Activated naive CD4-positive, alpha-beta T cell treated with anti-CD3 and anti-CD28 coated beads for 36 hours (primary cell): ENCODE measurements at regions of chr17 and their contacts with region 1.

Region 1: GRCh38 chr17:45218895-45219661 is 2.6 kb upstream of the FMNL1 start:
- DNase-seq: peak; percentile 95
- H3K4me3 Mint-ChIP-seq: peak overlapping the region; percentile 86
- H3K27ac Mint-ChIP-seq: peak overlapping the region; percentile 88
- H3K4me1 Mint-ChIP-seq: peaks cover 26% of the 10 kb centered on the region
- H3K27me3 Mint-ChIP-seq: no peaks in the 10 kb centered on the region

Region 2: GRCh38 chr17:45115871-45116724 is 103.0 kb before region 1 on chr17:
- CTCF ChIA-PET with region 1: no interaction called
- intact Hi-C with region 1: no loop called
- DNase-seq: no peak
- H3K4me3 Mint-ChIP-seq: no peak overlapping the region
- H3K27ac Mint-ChIP-seq: no peak overlapping the region
- H3K4me1 Mint-ChIP-seq: no peaks in the 10 kb centered on the region
- H3K27me3 Mint-ChIP-seq: no peaks in the 10 kb centered on the region

Region 3: GRCh38 chr17:45148183-45149036 is 70.7 kb before region 1 on chr17 and contains the start of gene HEXIM1:
- CTCF ChIA-PET with region 1: interaction called, 25 read pairs
- intact Hi-C with region 1: loop called (anchors 1 kb)
- DNase-seq: peak; percentile 99
- H3K4me3 Mint-ChIP-seq: peak within 1 kb of the TSS; percentile 97
- H3K27ac Mint-ChIP-seq: peak within 1 kb of the TSS; percentile 100
- H3K4me1 Mint-ChIP-seq: peaks cover 42% of the 10 kb centered on the region
- H3K27me3 Mint-ChIP-seq: no peaks in the 10 kb centered on the region
- total RNA-seq, gene HEXIM1: 24.3 to 24.7 TPM

Region 4: DNA sequence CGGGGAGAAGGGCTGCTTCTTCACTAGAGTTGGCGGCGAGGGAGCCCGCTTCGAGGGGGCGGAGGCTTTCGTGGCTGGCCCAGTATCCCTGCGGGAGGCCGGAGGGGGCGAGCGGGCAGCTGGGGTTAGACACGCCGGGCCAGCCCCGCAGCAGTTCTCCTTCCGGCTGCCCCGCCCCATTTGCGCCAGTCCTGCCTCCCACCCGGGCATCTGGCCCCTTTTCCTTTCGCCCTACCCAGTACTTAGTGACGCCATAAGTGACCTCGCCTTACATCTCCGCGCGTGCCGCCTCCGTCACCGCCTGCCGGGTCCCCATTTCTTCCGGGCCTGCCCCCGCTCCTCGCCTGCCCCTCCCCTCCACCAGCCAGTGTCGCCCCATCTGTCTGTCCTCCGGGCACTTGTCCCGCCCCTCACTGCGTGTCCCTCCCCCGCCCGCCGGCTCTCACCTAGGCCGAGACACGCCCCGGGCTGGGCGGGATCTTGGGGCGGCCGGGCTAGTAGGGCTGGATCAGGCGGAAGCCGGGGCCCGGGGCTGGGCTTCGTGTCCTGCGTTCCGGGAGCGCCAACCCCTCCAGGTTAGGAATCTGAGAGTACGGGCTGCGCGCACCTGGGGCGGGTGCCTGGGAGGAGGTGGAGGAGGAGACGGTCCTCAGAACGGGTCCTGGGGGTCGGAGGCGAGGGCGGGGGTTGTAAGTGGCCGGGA is 28.5 kb after region 1 on chr17:
- CTCF ChIA-PET with region 1: interaction called, 35 read pairs
- intact Hi-C with region 1: loop called (anchors 1 kb)
- DNase-seq: peak; percentile 99
- H3K4me3 Mint-ChIP-seq: peak overlapping the region; percentile 81
- H3K27ac Mint-ChIP-seq: peak overlapping the region; percentile 86
- H3K4me1 Mint-ChIP-seq: peaks cover 54% of the 10 kb centered on the region
- H3K27me3 Mint-ChIP-seq: no peaks in the 10 kb centered on the region

Region 5: DNA sequence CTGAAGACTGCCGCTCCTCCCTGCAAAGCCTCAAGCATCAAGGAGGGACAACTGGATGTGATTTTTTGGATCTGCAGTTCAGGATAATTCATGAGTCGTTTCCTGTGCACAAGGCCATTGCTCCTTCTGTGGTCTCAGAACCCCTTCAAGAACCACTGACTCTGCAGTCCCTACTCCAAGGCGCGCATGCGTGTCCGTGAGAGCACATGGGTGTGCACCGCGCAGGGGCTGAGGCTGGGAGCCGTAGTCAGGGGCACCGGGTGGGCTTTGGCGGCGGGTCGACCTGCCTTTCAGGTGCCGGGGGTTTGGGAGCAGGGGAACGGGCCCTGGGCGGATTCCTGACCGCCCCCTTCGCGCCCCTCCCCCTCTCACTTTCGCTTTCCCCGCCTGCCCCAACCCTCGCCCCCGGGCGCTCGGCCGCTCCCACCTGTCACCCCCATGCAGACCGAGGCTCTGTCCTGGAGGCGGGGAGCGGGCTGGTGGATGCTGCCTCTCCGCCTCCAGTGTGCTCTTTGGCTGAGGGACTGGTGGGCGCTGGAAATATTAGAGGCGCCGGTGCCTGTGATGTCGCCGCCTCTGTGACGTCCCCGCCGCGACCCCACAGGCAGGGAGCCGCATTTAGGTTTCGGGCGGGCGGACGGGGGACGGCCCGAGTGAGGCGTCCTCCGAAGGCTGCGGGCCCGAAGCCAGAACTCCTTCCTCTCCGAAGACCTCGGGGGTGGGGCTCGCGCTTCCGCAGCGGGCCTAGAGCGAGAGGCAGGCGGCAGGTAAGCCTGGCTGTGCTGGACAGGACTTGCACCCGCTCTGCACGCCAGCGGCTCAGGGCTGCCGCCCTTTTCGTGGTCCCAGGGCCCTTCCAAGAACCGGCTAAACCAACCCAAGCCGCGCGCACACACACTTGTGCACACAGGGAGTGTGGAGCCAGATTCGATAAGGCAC is 42.8 kb after region 1 on chr17 and contains the start of gene SPATA32:
- CTCF ChIA-PET with region 1: interaction called, 27 read pairs
- intact Hi-C with region 1: loop called (anchors 2 kb)
- DNase-seq: peak; percentile 79
- H3K4me3 Mint-ChIP-seq: peak within 1 kb of the TSS; percentile 81
- H3K27ac Mint-ChIP-seq: peak within 1 kb of the TSS; percentile 83
- H3K4me1 Mint-ChIP-seq: peaks cover 28% of the 10 kb centered on the region
- H3K27me3 Mint-ChIP-seq: no peaks in the 10 kb centered on the region
- total RNA-seq, gene SPATA32: 0.12 TPM in 1 of 2 experiments, not detected in the other

Region 6: DNA sequence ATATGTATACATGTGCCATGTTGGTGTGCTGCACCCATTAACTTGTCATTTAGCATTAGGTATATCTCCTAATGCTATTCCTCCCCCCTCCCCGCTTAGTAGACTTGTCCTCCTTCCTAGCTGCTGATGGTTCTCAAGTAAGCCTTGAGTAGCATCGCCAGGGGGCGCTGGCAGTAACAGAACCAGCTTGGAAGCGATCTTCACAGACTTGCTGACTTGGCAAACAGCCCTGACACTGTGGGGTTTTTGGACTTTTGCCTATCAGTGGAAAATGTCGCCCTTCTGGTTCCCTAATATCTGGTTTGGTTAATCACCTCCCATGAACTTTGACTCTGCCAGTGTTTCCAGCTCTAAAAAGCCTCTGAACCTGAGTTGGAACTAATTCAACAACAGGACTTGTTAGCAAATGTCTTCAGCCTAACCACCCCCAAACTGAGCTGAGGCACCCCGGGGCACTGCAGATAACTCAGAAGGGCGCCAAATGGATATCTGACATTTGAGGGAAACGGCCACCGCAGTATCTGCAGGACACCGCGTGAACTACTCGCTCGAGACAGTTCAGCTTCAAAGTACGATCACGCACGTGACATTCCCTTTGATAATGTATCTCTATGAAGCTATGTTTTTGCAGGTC is 58.3 kb after region 1 on chr17:
- CTCF ChIA-PET with region 1: interaction called, 29 read pairs
- intact Hi-C with region 1: no loop called
- DNase-seq: peak; percentile 96
- H3K4me3 Mint-ChIP-seq: no peak overlapping the region
- H3K27ac Mint-ChIP-seq: peak overlapping the region; percentile 22
- H3K4me1 Mint-ChIP-seq: peaks cover 11% of the 10 kb centered on the region
- H3K27me3 Mint-ChIP-seq: no peaks in the 10 kb centered on the region

Region 7: DNA sequence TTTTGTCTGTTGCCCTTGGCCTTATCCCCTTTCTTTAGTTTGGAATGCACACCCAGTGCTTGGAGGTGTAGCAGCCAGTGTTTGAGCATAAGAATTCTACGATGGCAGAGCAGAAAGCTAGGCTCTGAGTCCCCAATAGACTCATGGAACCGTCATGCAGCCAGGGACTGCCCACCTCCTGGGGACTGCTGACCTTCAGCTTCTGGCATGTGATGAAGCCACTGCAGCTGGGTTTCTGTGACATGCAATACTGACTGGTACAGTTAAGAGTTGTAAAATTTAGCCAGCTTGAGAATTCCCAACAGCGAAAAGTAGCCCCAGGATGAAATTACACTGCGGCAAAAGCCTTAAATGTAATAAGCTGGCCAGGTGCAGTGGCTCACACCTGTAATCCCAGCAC is 106.7 kb after region 1 on chr17:
- CTCF ChIA-PET with region 1: no interaction called
- intact Hi-C with region 1: no loop called
- DNase-seq: no peak
- H3K4me3 Mint-ChIP-seq: no peak overlapping the region
- H3K27ac Mint-ChIP-seq: no peak overlapping the region
- H3K4me1 Mint-ChIP-seq: peaks cover 16% of the 10 kb centered on the region
- H3K27me3 Mint-ChIP-seq: no peaks in the 10 kb centered on the region